Gastrocnemius medialis (tissue), 4 donors: ENCODE measurements at regions of chr20 and their contacts with region 1.

Region 1: DNA sequence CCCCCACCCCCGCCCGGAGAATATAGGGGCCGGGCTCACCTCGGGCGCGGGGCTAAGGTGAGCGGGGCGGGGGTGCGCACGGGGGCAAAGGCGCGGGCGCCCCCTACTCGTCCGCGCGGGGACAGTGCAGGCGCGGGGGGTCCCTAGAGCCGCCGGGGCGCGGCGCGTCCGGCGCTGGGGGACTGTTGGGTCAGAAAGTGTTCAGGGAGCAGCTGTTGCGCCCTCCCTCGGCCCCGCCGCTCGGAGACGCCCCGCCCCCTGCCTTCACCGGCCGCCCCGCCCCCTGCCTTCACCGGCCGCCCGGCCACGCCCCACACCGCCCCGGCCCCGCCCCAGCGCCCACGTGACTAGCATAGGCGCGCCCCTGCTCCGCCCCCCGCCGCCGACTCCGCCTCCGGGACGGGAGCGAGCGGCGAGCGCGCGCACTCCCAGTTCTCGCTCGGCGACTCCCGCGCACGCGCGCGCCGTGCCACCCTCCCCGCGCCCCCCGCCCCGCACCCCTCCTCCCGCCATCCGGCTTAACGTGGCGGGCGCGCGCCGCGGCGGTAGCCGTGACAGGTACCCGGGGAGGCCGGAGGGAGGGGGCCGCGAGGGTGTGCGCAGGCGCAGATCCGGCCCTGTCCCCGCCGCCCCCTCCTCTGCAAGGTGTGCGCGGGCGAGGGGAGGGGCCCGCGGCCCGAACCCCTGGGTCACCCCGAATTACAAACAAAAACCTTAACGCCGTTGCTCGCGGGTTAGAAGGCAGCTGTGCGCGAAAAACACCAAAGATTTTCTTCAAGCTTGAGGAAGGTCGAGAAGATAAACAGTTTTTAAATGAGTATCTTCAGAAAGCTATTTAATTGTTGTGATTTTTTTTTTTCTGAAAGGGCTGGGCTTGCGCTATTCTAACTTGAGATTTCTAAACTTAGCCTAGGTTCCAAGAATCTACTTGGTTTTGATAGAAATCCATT is 704 bp upstream of the ZNF217 start:
- DNase-seq: peak; percentile 93
- ATAC-seq: peak; percentile 71 to 78
- H3K4me3 ChIP-seq: peak overlapping the region; percentile 89 to 95 (median 94)
- H3K27ac ChIP-seq: peak overlapping the region; percentile 97 to 100 (median 98)
- H3K4me1 ChIP-seq: peaks cover 13 to 27% of the 10 kb centered on the region in 2 donors
- H3K27me3 ChIP-seq: no peaks in the 10 kb centered on the region
- CTCF ChIP-seq: peak in 1 of 5 experiments; percentile 18
- POLR2A ChIP-seq: peak; percentile 73 to 81

Region 2: DNA sequence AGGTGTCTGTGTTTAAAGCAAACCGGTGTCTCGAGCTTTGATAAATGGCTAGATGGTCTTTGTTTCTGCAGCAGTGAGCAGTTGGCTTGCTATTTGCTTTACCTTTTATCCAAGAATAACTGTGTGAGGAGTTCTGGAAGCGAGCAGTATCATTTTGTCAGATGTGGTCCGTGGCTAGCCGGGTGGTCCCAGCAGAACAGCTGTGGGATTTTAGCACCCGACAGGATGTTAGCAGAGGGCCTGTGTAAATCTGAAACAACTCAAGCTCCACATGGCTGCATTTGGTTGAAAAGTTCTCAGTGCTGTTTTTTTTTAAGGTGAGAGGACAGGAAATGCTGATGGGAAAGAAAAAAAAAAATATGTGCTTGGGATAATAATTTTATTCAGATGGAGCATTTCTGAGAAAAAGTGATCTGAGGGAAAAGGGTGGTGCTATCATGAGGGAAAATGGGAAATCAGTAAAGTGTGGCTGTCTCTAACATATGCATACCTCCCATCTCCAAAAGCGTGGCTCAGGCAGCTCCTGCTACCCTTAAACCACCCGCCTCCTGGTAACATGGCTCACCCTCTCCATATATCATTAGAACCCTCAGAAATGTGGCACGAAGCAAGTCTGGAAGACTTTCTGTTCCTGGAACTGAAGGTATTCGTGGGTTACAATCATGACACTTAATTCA is 406.8 kb before region 1 on chr20:
- in situ Hi-C with region 1: no loop called
- intact Hi-C with region 1: no loop called
- DNase-seq: no peak
- ATAC-seq: no peak
- H3K4me3 ChIP-seq: no peak overlapping the region
- H3K27ac ChIP-seq: no peak overlapping the region
- H3K4me1 ChIP-seq: no peaks in the 10 kb centered on the region
- H3K27me3 ChIP-seq: peaks cover 0 to under 1% (median 0%) of the 10 kb centered on the region in 3 donors
- CTCF ChIP-seq: no peak
- POLR2A ChIP-seq: no peak

Region 3: DNA sequence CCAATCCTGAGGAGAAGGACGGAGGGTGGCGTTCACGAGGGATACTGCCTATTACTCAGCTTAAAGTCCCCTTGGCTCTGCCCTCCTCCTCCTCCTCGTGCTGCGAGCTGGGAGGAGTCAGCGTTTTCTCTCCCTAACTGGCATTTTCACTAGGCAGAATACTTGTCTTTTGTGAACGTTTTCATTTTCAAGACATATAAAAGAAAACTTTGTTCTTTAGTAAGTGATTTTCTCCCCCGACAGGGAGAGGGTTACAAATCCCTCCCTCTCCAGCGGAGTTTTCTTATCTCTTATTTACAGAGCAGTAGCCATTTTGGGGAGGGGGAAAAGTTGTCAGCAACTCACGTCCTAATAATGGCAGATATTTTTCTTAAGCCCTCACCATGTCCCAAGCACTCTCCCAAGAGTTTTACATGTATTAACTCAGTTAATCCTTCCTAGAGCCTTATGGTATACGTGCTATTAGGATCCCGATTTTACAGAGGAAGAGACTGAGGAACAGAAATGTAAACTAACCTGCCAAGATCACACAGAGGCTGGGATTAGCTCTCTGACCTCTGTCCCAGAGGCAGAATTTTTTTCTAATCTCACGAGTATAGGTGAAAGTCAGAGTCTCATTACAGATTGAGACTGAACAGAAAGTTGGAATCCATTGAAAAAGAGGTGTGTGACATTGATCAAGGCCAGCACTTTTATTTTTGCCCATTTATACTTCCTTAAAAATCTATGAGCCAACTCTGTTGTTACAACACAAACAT is 29.3 kb after region 1 on chr20:
- in situ Hi-C with region 1: no loop called
- intact Hi-C with region 1: loop called (anchors 2 kb)
- DNase-seq: peak; percentile 77 to 83
- ATAC-seq: peak; percentile 94 to 96
- H3K4me3 ChIP-seq: peak overlapping the region; percentile 43 to 60 (median 58)
- H3K27ac ChIP-seq: peak overlapping the region; percentile 67 to 88 (median 85)
- H3K4me1 ChIP-seq: peaks cover 19 to 27% of the 10 kb centered on the region in 2 donors
- H3K27me3 ChIP-seq: no peaks in the 10 kb centered on the region
- CTCF ChIP-seq: no peak
- POLR2A ChIP-seq: peak; percentile 3 to 56

Region 4: GRCh38 chr20:53652090-53652858 is 57.9 kb after region 1 on chr20:
- in situ Hi-C with region 1: no loop called
- intact Hi-C with region 1: loop called (anchors 10 kb)
- DNase-seq: no peak
- ATAC-seq: peak; percentile 92 to 97
- H3K4me3 ChIP-seq: peak overlapping the region in 3 of 4 donors; percentile 19 to 32 (median 26)
- H3K27ac ChIP-seq: peak overlapping the region; percentile 56 to 78 (median 74)
- H3K4me1 ChIP-seq: peaks cover 9 to 19% of the 10 kb centered on the region in 2 donors
- H3K27me3 ChIP-seq: no peaks in the 10 kb centered on the region
- CTCF ChIP-seq: no peak
- POLR2A ChIP-seq: no peak

Region 5: DNA sequence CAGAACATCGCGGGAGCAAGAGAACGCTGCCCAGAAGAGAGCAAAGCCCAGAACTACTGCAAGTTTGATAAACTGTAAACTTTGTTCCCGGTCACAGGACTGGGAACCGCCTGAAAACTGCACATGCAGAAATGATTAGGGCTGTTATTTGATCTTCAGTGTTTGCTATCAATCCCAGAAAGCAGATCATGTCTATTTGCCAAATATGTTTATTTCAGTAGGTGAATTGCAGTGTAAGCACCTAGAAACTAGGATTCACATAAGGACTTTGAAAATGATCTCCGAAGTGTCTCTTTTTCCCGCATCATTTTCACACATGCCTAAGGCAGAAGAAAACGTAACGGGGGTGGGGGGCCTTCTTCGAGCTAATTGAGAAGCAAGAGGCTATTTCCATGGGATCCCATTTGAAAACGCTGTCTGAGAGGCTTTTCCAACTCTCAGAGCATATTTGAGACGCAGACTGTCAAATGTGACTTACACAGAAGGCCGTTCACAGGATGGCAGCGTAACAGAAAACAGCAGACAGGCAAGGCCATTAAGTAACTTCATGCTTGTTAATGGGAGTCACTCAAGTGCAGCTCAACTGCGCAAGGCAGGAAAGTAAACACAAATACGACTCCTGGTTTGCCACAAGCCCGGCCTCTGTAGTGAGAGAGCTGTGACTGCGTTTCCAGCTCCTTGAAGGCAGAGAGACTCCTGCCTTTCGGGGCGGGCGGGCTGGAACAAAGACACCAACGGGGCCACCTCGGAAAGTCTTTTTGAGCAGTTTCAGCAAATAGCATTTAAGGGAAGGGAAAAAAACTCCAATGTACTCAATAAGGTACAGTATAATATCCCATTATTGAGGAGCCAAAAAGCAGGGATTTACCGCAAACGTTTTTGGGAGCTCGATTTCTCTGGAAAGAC is 143.9 kb after region 1 on chr20:
- in situ Hi-C with region 1: no loop called
- intact Hi-C with region 1: loop called (anchors 5 kb)
- DNase-seq: peak; percentile 68 to 82
- ATAC-seq: peak; percentile 95 to 98
- H3K4me3 ChIP-seq: peak overlapping the region in 3 of 4 donors; percentile 16 to 28 (median 24)
- H3K27ac ChIP-seq: peak overlapping the region; percentile 10 to 71 (median 71)
- H3K4me1 ChIP-seq: peaks cover 4 to 28% of the 10 kb centered on the region in 2 donors
- H3K27me3 ChIP-seq: no peaks in the 10 kb centered on the region
- CTCF ChIP-seq: no peak
- POLR2A ChIP-seq: peak in 1 of 2 donors; percentile 54

Region 6: GRCh38 chr20:53828682-53829254 is 234.4 kb after region 1 on chr20:
- in situ Hi-C with region 1: no loop called
- intact Hi-C with region 1: loop called (anchors 5 kb)
- DNase-seq: peak in 1 of 2 donors; percentile 30
- ATAC-seq: peak; percentile 69 to 75
- H3K4me3 ChIP-seq: peak overlapping the region; percentile 18 to 53 (median 32)
- H3K27ac ChIP-seq: peak overlapping the region; percentile 73 to 81 (median 77)
- H3K4me1 ChIP-seq: peaks cover 20 to 36% of the 10 kb centered on the region in 2 donors
- H3K27me3 ChIP-seq: no peaks in the 10 kb centered on the region
- CTCF ChIP-seq: no peak
- POLR2A ChIP-seq: peak in 1 of 2 donors; percentile 3

Region 7: DNA sequence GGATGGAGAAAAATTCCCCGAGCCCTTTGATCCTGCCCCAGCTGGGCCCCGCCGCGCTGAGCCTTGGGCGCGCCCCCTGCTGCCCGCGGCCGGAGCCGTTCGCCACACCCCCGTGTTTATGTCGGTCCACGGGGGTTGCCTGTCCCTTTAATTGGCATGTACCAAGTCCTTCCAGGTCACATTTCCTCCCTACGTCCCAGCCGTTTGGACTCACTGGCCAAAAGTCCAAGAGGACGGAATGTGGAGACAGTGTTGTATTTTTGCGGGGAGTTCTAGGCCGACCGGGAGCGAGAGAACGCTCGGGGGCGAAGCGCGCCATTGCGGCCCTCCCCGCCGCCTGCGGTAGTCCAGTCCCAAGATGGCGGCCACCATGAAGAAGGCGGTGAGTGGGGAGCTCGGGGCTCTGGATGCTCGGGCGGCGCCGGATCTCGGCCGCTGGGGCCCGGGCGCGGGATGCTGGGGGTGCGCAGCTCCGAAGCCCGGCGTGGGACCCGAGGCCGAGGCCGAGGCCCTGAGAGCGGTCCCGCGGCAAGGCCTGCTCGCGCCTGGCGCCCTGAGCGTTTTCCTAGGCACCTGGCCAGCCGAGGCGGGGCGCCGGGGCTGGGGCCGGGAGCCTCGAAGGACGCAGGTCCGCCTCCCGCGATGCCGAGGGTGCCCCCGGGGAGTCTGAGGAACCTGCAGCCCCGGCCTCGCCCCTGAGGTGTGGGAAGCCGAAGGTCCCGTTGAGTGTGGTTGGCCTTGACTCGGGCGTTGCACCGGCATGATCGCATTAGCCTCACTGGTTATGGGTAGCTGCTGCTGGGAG is 613.6 kb after region 1 on chr20 and contains the start of gene PFDN4:
- in situ Hi-C with region 1: loop called in 2 of 4 experiments (anchors 25 kb)
- intact Hi-C with region 1: no loop called
- DNase-seq: peak; percentile 59 to 70
- ATAC-seq: peak; percentile 92 to 95
- H3K4me3 ChIP-seq: peak within 1 kb of the TSS; percentile 76 to 94 (median 84)
- H3K27ac ChIP-seq: peak within 1 kb of the TSS; percentile 95 to 99 (median 98)
- H3K4me1 ChIP-seq: peaks cover 18 to 19% of the 10 kb centered on the region in 2 donors
- H3K27me3 ChIP-seq: no peaks in the 10 kb centered on the region
- CTCF ChIP-seq: peak; percentile 44 to 89 (median 66)
- POLR2A ChIP-seq: peak; percentile 26 to 36
- total RNA-seq, gene PFDN4: 36.8 to 90.2 (median 64.8) TPM